ENCODE measurements at regions of chr4 and their contacts with region 1.

Region 1: DNA sequence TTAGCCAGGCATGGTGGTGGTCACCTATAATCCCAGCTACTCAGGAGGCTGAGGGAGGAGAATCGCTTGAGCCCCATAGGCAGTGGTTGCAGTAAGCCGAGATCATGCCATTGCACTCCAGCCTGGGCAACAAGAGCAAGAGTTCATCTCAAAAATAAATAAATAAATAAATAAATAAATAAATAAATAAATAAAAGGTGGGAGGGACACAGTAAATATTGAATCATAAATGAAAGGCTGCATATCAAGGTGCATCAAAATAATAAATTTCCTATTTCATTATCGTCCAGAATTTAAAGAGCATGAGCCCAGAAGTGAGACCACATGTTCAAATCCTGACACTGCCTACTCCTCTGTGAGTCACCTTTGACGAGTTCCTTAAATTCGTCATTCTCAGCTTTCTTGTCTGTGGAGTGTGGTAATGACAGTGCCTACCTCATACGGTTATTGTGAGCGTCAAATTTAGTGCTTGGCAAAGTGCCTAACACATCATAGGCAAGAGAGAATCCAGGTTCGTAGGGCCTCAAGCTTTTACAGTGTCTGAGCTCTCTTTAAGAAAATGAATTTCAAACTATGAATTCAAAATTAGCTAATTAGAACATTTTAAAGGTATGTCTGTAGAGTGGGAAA is 49.9 kb downstream of the IL15 start:
- ATAC-seq: peak in 2 of 8 experiments; percentile 38 to 65
- H3K4me3 ChIP-seq: no peak overlapping the region
- H3K27ac ChIP-seq: no peak overlapping the region
- H3K4me1 ChIP-seq: no peaks in the 10 kb centered on the region

Region 2: GRCh38 chr4:141350122-141350904 is 335.9 kb before region 1 on chr4:
- in situ Hi-C with region 1: loop called in 1 of 9 experiments (anchors 25 kb)
- ATAC-seq: peak in 5 of 8 experiments; percentile 27 to 80 (median 41)
- H3K4me3 ChIP-seq: no peak overlapping the region
- H3K27ac ChIP-seq: no peak overlapping the region
- H3K4me1 ChIP-seq: no peaks in the 10 kb centered on the region

Region 3: DNA sequence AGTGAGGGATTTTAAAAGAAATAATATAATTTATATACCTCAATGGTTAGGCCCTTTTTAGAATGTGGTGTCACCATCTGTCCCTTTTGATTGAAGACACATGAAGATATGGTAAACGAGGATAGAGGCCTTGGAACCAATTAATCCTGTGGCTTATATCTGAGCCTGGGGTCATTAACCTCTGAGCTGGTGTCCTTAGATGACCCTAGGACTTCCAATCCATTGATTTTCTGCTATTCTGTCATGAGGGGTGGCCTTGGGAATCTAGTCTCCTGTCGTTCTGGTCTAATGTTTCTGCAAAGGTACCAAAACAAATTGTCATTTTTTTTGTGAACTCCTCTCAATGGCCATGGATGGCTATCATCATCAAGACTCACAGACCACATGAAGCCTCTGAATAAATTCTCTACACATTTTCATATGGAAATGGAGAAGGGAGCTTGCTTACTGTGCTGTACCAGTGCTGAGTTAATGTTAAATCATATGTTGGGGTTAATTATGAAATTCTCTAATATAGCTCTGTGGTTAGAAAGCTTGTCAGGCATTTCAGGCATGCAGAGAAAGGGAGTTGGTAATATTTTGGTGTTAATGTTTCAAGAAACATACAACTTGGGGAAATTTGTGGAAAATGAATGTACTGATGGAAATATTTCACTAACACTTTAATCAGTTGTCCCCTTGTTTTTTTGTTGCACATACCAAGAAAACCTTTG is 254.1 kb before region 1 on chr4:
- in situ Hi-C with region 1: no loop called
- ATAC-seq: no peak
- H3K4me3 ChIP-seq: no peak overlapping the region
- H3K27ac ChIP-seq: no peak overlapping the region
- H3K4me1 ChIP-seq: no peaks in the 10 kb centered on the region

Region 4: GRCh38 chr4:141853091-141853764 is 167.0 kb after region 1 on chr4:
- in situ Hi-C with region 1: no loop called
- ATAC-seq: peak in 3 of 8 experiments; percentile 66 to 94 (median 79)
- H3K4me3 ChIP-seq: no peak overlapping the region
- H3K27ac ChIP-seq: no peak overlapping the region
- H3K4me1 ChIP-seq: no peaks in the 10 kb centered on the region

Measured in motor neuron (in vitro differentiated cells).